Activated CD8-positive, alpha-beta memory T cell treated with anti-CD3 and anti-CD28 coated beads, Interleukin-2, amount 10 ng/mL, durations not matched to agents 7 days and 5 days (primary cell): ENCODE measurements at regions of chr1 and their contacts with region 1.

Region 1: GRCh38 chr1:145891587-145892485 is 6.2 kb upstream of the ANKRD35 start:
- DNase-seq: peak; percentile 73
- ATAC-seq: peak; percentile 85
- H3K4me3 Mint-ChIP-seq: no peak overlapping the region
- H3K27ac Mint-ChIP-seq: no peak overlapping the region
- H3K4me1 Mint-ChIP-seq: peaks cover under 1% of the 10 kb centered on the region
- H3K27me3 Mint-ChIP-seq: peaks cover 4% of the 10 kb centered on the region

Region 2: DNA sequence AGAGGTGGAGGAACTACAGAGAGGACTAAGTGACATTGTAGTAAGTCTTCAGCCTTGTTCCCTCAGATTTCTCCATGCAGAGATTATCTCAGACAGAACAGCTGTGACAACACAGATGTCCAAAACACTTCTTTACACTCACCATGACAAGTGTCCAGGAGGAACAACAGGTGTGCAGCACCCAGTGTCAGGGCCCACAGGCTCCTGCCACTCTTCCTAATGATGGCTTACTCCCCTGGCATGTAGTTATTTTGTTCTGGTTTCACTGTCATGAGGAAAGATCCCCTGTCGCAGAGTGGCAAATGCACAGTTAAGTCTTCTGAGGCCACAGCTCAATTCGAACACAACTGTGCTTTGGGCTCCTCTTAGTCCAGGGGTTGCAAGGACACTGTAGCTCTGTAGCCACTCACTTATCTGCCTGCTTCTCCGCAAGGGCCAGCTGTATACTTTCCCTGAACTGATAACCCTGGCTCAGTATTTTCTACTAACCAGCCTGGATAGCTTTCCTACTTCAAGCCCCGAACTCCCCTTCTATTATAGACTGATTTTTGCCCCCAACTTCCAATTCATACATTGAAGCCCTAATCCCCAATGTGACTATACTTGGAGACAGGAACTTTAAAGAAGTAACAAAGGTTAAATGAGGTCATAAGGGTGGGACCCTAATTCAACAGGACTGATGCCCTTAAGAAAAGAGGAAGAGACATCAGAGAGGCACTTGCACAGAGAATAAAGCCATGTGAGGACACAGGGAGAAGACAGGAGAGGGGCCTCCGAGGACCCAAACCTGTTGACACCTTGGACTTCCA is 195.8 kb before region 1 on chr1:
- CTCF ChIA-PET with region 1: no interaction called
- DNase-seq: no peak
- ATAC-seq: no peak
- H3K4me3 Mint-ChIP-seq: no peak overlapping the region
- H3K27ac Mint-ChIP-seq: no peak overlapping the region
- H3K4me1 Mint-ChIP-seq: peaks cover 8% of the 10 kb centered on the region
- H3K27me3 Mint-ChIP-seq: peaks cover 9% of the 10 kb centered on the region

Region 3: GRCh38 chr1:145858894-145859490 is 32.8 kb before region 1 on chr1 and contains the start of gene PIAS3:
- CTCF ChIA-PET with region 1: interaction called, 27 read pairs
- DNase-seq: peak; percentile 94
- ATAC-seq: peak; percentile 87
- H3K4me3 Mint-ChIP-seq: peak within 1 kb of the TSS; percentile 95
- H3K27ac Mint-ChIP-seq: peak within 1 kb of the TSS; percentile 87
- H3K4me1 Mint-ChIP-seq: peaks cover 10% of the 10 kb centered on the region
- H3K27me3 Mint-ChIP-seq: peaks cover 8% of the 10 kb centered on the region
- total RNA-seq, gene PIAS3: 20.3 to 23.6 TPM

Region 4: GRCh38 chr1:145871994-145872924 is 19.6 kb before region 1 on chr1:
- CTCF ChIA-PET with region 1: interaction called, 21 read pairs
- DNase-seq: peak; percentile 70
- ATAC-seq: peak; percentile 88
- H3K4me3 Mint-ChIP-seq: peak overlapping the region; percentile 73
- H3K27ac Mint-ChIP-seq: peak overlapping the region; percentile 41
- H3K4me1 Mint-ChIP-seq: peaks cover 17% of the 10 kb centered on the region
- H3K27me3 Mint-ChIP-seq: peaks cover 41% of the 10 kb centered on the region

Region 5: DNA sequence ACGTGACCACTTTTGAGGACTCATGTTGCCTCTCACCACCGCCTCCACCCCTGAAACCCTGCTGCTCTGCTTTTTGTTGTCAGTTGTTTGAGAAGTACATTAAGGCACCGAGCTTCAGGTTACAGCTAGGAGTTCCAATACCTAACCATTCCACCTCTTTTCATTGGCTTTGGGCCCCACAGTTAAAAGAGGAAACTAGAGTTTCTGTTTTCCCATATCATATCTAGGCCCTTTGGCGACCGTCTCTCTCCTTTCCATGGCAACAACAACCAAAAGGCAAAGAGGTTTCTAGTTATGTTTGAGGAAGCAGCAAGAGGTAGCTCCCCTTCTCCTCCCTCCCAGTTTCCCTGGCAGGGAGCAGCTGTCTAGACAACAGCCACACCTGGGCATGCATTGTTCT is 12.1 kb before region 1 on chr1:
- CTCF ChIA-PET with region 1: interaction called, 17 read pairs
- DNase-seq: no peak
- ATAC-seq: no peak
- H3K4me3 Mint-ChIP-seq: no peak overlapping the region
- H3K27ac Mint-ChIP-seq: no peak overlapping the region
- H3K4me1 Mint-ChIP-seq: peaks cover 5% of the 10 kb centered on the region
- H3K27me3 Mint-ChIP-seq: peaks cover 47% of the 10 kb centered on the region

Region 6: GRCh38 chr1:145906954-145907753 is 15.3 kb after region 1 on chr1:
- CTCF ChIA-PET with region 1: interaction called, 25 read pairs
- DNase-seq: no peak
- ATAC-seq: no peak
- H3K4me3 Mint-ChIP-seq: no peak overlapping the region
- H3K27ac Mint-ChIP-seq: no peak overlapping the region
- H3K4me1 Mint-ChIP-seq: peaks cover 14% of the 10 kb centered on the region
- H3K27me3 Mint-ChIP-seq: no peaks in the 10 kb centered on the region

Region 7: DNA sequence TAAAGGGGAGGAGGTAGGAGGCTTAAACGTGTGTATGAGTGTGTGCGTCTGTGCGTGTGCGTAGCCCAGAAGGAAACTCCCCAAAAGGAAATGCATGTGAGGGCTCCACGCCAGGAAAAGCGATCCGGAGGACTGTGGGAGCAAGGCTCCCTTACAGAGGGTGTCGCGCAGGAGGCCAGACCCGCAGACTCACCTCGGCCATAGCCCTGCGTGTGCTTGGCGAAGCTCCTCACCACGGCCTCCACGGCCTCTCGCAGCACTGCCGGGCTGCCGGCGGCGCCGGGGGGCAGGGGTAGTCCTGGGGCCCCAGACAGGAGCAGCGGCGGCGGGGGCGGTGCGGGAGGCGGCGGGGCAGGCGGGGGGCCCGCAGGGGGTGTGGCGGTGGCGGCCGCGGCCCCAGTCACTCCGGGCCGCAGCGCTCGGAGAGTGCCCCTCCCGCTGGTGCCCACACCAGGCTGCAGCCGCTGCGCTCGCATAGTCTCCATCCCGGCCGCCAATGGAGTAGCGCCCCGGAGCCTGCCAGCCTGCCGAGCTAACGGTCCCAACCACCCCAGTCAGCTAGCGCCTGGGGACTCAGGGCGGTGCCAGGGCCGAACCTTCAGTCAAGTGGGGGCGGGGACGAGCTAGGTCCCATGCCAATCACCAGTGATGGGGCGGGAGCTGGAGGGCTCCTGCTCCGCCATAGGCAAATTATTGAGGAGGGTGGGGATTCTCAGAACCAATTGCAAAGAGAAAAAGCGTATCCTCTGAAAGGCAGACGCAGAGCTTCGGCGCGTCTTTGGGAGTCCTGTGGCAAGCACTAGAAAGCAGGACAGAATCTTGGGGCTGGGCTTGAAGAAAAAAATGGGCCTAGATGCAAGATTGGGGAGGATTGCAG is 65.8 kb after region 1 on chr1 and contains the start of gene LIX1L:
- CTCF ChIA-PET with region 1: interaction called, 14 read pairs
- DNase-seq: peak; percentile 98
- ATAC-seq: peak; percentile 90
- H3K4me3 Mint-ChIP-seq: peak within 1 kb of the TSS; percentile 91
- H3K27ac Mint-ChIP-seq: peak within 1 kb of the TSS; percentile 86
- H3K4me1 Mint-ChIP-seq: peaks cover 68% of the 10 kb centered on the region
- H3K27me3 Mint-ChIP-seq: no peaks in the 10 kb centered on the region
- total RNA-seq, gene LIX1L: 35.0 to 36.2 TPM

Region 8: DNA sequence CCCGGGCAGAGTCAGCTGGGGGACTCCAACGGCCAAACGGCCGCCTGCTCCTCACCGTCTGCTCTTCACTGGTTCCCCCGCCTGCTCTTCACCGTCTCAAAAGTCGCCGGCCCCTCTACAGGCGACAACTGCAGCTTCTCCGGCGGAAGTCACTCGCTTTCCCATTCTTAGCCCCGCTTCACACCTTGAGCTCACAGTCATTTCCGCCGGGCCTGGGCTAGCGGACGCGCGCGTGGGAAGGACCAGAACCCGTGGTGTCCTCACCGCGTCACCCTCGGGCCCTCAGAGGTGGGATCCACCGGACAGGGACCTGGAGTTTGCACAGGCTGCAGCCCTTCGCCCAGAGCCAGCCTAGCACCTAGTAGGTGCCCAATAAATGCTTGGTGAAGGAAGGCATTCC is 157.6 kb after region 1 on chr1:
- CTCF ChIA-PET with region 1: no interaction called
- DNase-seq: no peak
- ATAC-seq: no peak
- H3K4me3 Mint-ChIP-seq: peak overlapping the region; percentile 35
- H3K27ac Mint-ChIP-seq: no peak overlapping the region
- H3K4me1 Mint-ChIP-seq: peaks cover 35% of the 10 kb centered on the region
- H3K27me3 Mint-ChIP-seq: peaks cover 4% of the 10 kb centered on the region